ENCODE measurements at regions of chr20 and their contacts with region 1.

Region 1: DNA sequence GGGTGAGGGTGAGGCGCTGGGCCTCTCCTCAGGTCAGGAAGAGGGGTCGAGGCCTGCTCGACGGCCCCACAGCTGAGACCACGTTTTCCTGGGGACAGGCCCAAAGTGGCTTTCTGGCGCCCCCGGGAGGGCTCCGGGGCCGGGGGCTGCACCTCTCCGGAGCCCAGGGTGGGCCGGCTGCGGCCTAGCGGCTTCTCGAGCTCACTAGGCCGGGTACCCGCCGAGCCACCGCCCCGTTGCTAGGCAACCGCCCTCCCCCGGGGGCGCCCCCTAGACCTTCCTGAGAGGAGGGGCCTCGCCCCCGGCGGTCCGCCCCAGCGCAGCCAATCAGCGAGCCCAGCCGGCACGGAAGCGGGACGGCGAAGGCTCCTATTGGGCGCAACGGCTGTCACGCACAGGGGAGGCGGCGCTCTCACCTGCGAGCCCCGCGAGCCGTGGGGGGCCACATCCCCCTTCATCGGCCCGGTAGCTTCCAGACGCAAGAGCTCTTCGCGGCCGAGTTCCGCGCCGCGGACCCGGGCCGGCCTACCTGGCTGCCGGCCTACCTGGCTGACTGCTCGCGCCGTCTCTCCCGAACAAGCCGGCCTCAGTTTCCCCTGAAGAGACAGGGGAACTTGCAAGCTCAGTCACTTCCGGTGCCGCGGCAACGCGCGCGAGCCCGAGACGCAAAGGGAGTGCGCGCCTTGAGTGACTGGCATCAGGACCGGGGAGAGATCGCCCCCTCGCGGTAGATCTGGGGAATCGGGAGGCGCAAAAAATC is 831 bp upstream of the BCL2L1 start:
- DNase-seq: peak; percentile 97 to 99
- H3K4me3 ChIP-seq: peak overlapping the region; percentile 70 to 78 (median 72)
- H3K27ac ChIP-seq: peak overlapping the region; percentile 97 to 100 (median 98)
- H3K4me1 ChIP-seq: peaks cover 24 to 42% (median 36%) of the 10 kb centered on the region in 4 donors
- H3K27me3 ChIP-seq: no peaks in the 10 kb centered on the region
- CTCF ChIP-seq: peak in 6 of 7 experiments; percentile 73 to 100 (median 92)
- EP300 ChIP-seq: no peak
- POLR2A ChIP-seq: peak in 1 of 4 donors; percentile 15

Region 2: DNA sequence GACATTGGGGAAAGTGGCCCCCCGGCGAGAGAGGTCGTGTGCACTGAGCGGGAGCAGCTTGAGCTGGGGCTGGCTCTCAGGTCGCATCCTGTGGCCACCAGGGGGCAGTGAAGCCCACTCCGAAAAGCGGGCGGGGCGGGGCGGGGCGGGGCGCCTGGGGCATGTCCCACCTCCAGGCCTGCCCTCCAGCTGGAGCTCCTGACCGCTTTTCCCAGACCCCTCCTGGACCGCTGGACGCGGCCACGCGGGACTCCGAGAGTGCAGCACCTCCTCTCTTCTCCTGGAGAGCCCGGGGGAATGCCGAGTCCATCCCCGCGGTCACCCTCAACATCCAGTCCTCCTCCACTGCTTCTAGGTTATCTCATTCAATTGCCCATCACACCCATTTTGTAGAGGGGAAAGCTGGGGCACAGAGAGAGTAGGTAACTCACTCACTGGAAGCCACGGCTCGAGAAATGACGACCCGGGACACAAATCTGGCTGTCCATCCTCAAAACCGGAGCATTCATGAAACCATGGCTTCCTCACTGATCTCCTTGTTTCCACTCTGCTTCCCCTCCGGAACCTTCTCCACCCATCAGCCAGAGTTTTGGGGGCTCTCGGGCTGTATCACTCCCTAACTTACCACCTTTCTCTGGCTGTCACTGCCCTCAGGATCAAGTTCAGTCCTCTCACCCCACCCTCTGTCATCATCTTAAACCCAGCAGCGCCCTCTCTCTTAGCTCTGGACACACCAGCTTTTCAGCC is 61.7 kb before region 1 on chr20:
- intact Hi-C with region 1: loop called (anchors 5 kb)
- DNase-seq: peak; percentile 86 to 93
- H3K4me3 ChIP-seq: peak overlapping the region; percentile 31 to 40 (median 36)
- H3K27ac ChIP-seq: peak overlapping the region; percentile 74 to 90 (median 83)
- H3K4me1 ChIP-seq: peaks cover 48 to 57% (median 56%) of the 10 kb centered on the region in 4 donors
- H3K27me3 ChIP-seq: no peaks in the 10 kb centered on the region
- CTCF ChIP-seq: peak in 5 of 7 experiments; percentile 68 to 93 (median 78)
- EP300 ChIP-seq: no peak
- POLR2A ChIP-seq: no peak

Region 3: DNA sequence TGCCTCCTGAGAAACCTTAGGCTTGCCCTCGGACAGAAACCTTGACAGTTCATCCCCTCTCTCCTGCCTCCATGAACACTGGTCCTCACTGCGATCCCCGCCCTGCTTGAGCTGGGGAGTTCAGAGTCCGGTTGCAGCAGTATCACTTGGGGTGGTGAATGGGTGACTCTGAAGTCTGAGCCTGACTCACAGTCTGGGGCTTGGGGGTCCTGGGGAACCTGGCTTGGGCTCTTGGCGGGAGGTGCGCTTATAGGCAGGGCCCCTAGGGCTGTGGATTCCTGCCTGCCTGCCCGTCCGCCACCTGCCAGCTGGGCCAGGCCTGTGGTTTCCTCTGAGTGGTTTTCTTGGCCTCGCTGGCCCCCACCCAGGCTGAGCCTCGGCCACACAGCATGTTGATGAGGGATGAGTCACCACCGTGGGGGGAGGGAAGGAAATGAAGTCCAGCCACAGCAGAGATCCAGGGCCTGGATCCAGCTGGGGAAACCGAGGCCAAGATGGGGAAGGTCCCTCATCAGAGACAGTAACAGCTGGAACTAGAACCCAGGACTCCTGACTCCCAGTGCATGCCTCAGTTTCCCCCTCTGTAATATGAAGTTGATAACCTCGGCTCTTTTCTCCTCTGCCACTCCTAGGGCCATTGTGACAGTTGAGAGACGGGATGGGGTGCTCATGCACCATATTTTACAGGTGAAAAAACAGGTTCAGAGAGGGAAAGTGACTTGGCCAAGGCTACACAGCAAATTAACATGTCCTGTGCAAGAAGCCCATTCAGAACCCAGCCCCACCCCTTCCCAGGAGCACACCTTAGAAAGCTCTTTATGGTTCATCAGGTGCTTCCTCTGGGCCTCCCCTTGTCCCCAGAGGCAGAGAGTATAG is 112.7 kb after region 1 on chr20:
- intact Hi-C with region 1: no loop called
- DNase-seq: peak; percentile 65 to 82
- H3K4me3 ChIP-seq: no peak overlapping the region
- H3K27ac ChIP-seq: peak overlapping the region in 1 of 5 donors; percentile 46
- H3K4me1 ChIP-seq: peaks cover 10 to 36% (median 17%) of the 10 kb centered on the region in 4 donors
- H3K27me3 ChIP-seq: peaks cover 0 to 10% (median 0%) of the 10 kb centered on the region in 3 donors
- CTCF ChIP-seq: no peak
- EP300 ChIP-seq: no peak
- POLR2A ChIP-seq: no peak

Region 4: GRCh38 chr20:31890646-31891045 is 167.1 kb after region 1 on chr20:
- intact Hi-C with region 1: no loop called
- DNase-seq: no peak
- H3K4me3 ChIP-seq: no peak overlapping the region
- H3K27ac ChIP-seq: no peak overlapping the region
- H3K4me1 ChIP-seq: peaks cover 0 to 5% (median 0%) of the 10 kb centered on the region in 4 donors
- H3K27me3 ChIP-seq: peaks cover 0 to 5% (median 0%) of the 10 kb centered on the region in 3 donors
- CTCF ChIP-seq: no peak
- EP300 ChIP-seq: no peak
- POLR2A ChIP-seq: no peak

Measured in stomach (tissue), 19 donors.